ENCODE measurements at regions of chr7 and their contacts with region 1.

Region 1: DNA sequence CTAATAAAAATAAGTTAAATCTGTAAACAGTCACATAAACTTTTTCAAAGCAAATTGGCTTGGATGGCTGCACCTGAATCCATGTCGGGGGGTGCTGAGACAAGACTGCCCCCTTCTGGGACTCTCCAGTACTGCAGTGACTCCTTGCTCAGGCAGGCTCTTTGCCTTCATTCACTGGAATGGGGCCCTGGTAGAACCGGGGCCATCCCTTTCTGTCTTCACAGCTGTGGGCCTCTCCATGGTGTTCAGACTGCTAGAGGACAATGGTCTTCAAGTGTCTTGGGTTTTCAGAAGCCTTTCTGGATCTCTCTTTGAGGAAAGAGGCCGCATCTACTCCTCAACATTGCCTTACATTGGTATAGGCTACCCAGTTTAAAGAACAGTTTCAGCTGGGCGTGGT is 16.1 kb upstream of the IMPDH1 start:
- DNase-seq: peak; percentile 69 to 84
- H3K4me3 ChIP-seq: no peak overlapping the region
- H3K4me3 Mint-ChIP-seq: no peak overlapping the region
- H3K27ac Mint-ChIP-seq: no peak overlapping the region
- H3K4me1 ChIP-seq: no peaks in the 10 kb centered on the region
- H3K4me1 Mint-ChIP-seq: no peaks in the 10 kb centered on the region
- H3K27me3 ChIP-seq: no peaks in the 10 kb centered on the region
- H3K27me3 Mint-ChIP-seq: no peaks in the 10 kb centered on the region
- CTCF ChIP-seq: peak; percentile 89 to 91

Region 2: GRCh38 chr7:128104035-128104742 is 321.7 kb before region 1 on chr7:
- CTCF ChIA-PET with region 1: no interaction called
- POLR2A ChIA-PET with region 1: no interaction called
- intact Hi-C with region 1: no loop called
- DNase-seq: peak in 1 of 2 experiments; percentile 34
- H3K4me3 ChIP-seq: peak overlapping the region; percentile 26
- H3K4me3 Mint-ChIP-seq: peak overlapping the region; percentile 44
- H3K27ac Mint-ChIP-seq: peak overlapping the region; percentile 36
- H3K4me1 ChIP-seq: no peaks in the 10 kb centered on the region; the same call in 1 of the 2 replicates
- H3K4me1 Mint-ChIP-seq: peaks cover 6% of the 10 kb centered on the region
- H3K27me3 ChIP-seq: no peaks in the 10 kb centered on the region
- H3K27me3 Mint-ChIP-seq: peaks cover 4% of the 10 kb centered on the region
- CTCF ChIP-seq: no peak

Region 3: GRCh38 chr7:128197589-128197988 is 228.3 kb before region 1 on chr7:
- CTCF ChIA-PET with region 1: no interaction called
- POLR2A ChIA-PET with region 1: no interaction called
- intact Hi-C with region 1: no loop called
- DNase-seq: no peak
- H3K4me3 ChIP-seq: no peak overlapping the region
- H3K4me3 Mint-ChIP-seq: no peak overlapping the region
- H3K27ac Mint-ChIP-seq: no peak overlapping the region
- H3K4me1 ChIP-seq: no peaks in the 10 kb centered on the region
- H3K4me1 Mint-ChIP-seq: no peaks in the 10 kb centered on the region
- H3K27me3 ChIP-seq: peaks cover 2% of the 10 kb centered on the region
- H3K27me3 Mint-ChIP-seq: peaks cover 16% of the 10 kb centered on the region
- CTCF ChIP-seq: no peak

Region 4: DNA sequence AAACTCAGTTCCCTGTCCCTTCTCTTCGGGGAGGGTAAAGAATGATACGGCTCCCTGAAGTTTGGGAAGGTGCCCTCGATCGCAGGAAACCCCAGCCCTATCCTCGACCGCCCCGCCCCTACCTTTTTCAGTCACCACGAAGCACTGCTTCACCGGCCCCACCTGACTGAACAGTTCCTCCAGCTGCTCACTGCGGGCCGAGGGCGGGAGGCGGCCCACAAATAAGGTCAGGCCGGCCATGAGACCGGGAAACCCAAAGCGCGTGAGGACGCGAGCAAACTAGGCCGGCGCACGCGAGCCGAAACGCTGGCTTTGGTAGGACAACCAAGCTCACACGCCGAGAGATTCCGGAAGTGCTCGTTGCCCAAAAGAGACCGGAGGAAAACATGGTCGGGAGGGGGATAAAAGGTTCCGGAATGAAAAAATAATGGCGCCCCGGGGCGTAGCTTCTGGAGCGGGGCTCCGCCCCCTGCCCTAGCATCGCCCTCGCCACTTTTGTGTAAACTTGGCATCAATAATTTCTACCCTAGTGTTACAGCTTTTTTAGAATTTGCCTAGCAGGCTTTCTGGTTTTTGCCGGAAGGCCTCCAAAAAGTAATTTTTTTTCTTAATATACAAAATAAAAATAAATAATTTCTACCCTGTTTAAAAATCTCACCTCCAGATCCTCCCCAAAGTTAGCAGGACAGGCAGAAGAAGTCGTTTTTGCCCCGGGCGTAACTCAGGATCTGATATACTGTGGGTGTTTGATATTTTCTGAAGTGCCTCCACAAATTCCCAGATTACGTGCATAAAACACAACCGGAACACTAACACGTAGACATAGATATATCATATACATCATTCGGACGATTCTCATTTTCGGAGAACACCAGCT is 82.1 kb before region 1 on chr7 and contains the start of gene RBM28:
- CTCF ChIA-PET with region 1: interaction called, 11 read pairs
- POLR2A ChIA-PET with region 1: no interaction called
- intact Hi-C with region 1: no loop called
- DNase-seq: peak; percentile 92
- H3K4me3 ChIP-seq: peak within 1 kb of the TSS; percentile 86
- H3K4me3 Mint-ChIP-seq: peak within 1 kb of the TSS; percentile 72
- H3K27ac Mint-ChIP-seq: peak within 1 kb of the TSS; percentile 19
- H3K4me1 ChIP-seq: no peaks in the 10 kb centered on the region
- H3K4me1 Mint-ChIP-seq: peaks cover 8% of the 10 kb centered on the region
- H3K27me3 ChIP-seq: no peaks in the 10 kb centered on the region; the same call in 1 of the 2 replicates
- H3K27me3 Mint-ChIP-seq: peaks cover 3% of the 10 kb centered on the region
- CTCF ChIP-seq: no peak
- total RNA-seq, gene RBM28: 68.0 and 71.4 TPM in 2 replicates

Region 5: DNA sequence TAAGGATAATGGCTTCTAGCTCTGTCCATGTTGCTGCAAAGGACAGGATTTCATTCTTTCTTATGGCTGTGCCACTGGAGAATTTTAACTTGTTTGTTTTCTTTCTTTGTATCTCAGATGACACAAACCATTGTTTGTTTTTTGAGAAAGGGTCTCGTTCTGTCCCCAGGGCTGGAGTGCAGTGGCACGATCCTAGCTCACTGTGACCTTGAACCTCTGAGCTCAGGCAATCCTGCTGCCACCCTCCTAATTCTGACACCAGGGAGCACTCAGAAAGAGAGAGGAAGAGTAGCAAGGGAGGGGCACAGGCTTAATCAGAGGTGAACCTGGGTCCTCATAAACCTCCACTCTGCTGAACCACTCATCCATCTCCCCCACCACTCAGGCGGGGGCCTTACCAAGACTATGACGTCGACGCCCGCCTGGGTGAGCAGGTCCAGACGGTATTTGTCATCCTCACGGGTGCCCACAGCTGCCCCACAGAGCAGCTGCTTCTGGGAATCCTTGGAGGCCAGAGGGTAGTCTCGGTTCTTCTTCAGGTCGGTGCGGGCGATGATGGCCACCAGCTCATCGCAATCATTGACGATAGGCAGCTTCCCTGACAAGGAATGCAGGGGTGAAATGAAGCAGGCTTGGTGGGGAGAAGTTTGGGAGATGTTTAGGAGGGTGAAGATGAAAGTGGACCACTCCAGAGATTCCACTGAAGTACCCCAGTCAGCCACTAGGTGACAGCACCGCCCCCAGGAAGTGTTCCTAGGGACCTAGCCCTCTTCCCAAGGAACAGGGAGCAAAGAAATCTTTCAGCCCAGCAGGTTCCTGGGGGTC is 27.6 kb before region 1 on chr7:
- CTCF ChIA-PET with region 1: interaction called, 5 read pairs
- POLR2A ChIA-PET with region 1: no interaction called
- intact Hi-C with region 1: loop called (anchors 1 kb)
- DNase-seq: peak; percentile 66 to 78
- H3K4me3 ChIP-seq: no peak overlapping the region
- H3K4me3 Mint-ChIP-seq: no peak overlapping the region
- H3K27ac Mint-ChIP-seq: no peak overlapping the region
- H3K4me1 ChIP-seq: no peaks in the 10 kb centered on the region
- H3K4me1 Mint-ChIP-seq: no peaks in the 10 kb centered on the region
- H3K27me3 ChIP-seq: no peaks in the 10 kb centered on the region
- H3K27me3 Mint-ChIP-seq: no peaks in the 10 kb centered on the region
- CTCF ChIP-seq: peak; percentile 95 to 98

Region 6: GRCh38 chr7:128443831-128444600 is 18.2 kb after region 1 on chr7:
- CTCF ChIA-PET with region 1: interaction called, 18 read pairs
- POLR2A ChIA-PET with region 1: no interaction called
- intact Hi-C with region 1: no loop called
- DNase-seq: peak; percentile 53 to 62
- H3K4me3 ChIP-seq: no peak overlapping the region
- H3K4me3 Mint-ChIP-seq: no peak overlapping the region
- H3K27ac Mint-ChIP-seq: peak overlapping the region; percentile 69
- H3K4me1 ChIP-seq: peaks cover 26% of the 10 kb centered on the region
- H3K4me1 Mint-ChIP-seq: peaks cover 17% of the 10 kb centered on the region
- H3K27me3 ChIP-seq: no peaks in the 10 kb centered on the region
- H3K27me3 Mint-ChIP-seq: no peaks in the 10 kb centered on the region
- CTCF ChIP-seq: no peak

Region 7: DNA sequence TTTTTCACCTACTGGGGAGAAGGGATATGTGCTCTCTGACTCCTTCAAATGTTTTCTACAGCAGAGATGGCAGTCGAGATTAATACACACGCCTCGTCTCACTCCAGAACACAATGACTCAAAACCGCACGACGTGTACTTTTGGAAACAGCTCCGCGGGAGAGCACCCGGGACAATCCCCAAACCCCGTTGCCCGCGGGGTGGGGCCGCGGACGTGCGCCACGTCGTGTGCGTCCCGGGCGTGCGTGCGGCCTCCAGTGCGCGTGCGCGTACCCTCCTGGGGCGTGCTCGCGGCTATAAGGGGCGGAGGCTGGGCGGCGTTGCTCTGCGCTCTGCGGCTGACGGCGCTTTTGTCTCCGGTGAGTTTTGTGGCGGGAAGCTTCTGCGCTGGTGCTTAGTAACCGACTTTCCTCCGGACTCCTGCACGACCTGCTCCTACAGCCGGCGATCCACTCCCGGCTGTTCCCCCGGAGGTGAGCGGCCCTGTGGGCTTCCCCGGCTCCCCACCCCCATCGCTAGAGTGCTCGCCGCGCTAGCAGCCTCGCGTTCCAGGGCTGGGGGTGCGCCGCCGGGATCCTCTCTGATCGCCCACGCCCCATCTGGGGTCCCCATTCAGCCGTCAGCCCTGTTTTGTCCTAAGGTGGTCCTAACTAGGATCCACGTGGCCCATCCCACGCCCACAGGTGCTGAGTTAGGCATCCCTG is 29.9 kb after region 1 on chr7 and contains the start of gene HILPDA:
- CTCF ChIA-PET with region 1: interaction called, 226 read pairs
- POLR2A ChIA-PET with region 1: interaction called, 3 read pairs
- intact Hi-C with region 1: loop called (anchors 1 kb)
- DNase-seq: peak; percentile 89 to 90
- H3K4me3 ChIP-seq: peak within 1 kb of the TSS; percentile 70
- H3K4me3 Mint-ChIP-seq: peak within 1 kb of the TSS; percentile 99
- H3K27ac Mint-ChIP-seq: peak within 1 kb of the TSS; percentile 92
- H3K4me1 ChIP-seq: peaks cover 33% of the 10 kb centered on the region
- H3K4me1 Mint-ChIP-seq: peaks cover 32% of the 10 kb centered on the region
- H3K27me3 ChIP-seq: no peaks in the 10 kb centered on the region
- H3K27me3 Mint-ChIP-seq: peaks cover 5% of the 10 kb centered on the region
- CTCF ChIP-seq: no peak
- total RNA-seq, gene HILPDA: 17.0 and 17.8 TPM in 2 replicates

Region 8: GRCh38 chr7:128462460-128462859 is 36.6 kb after region 1 on chr7:
- CTCF ChIA-PET with region 1: interaction called, 226 read pairs
- POLR2A ChIA-PET with region 1: interaction called, 3 read pairs
- intact Hi-C with region 1: loop called (anchors 1 kb)
- DNase-seq: no peak
- H3K4me3 ChIP-seq: no peak overlapping the region
- H3K4me3 Mint-ChIP-seq: no peak overlapping the region
- H3K27ac Mint-ChIP-seq: no peak overlapping the region
- H3K4me1 ChIP-seq: no peaks in the 10 kb centered on the region
- H3K4me1 Mint-ChIP-seq: peaks cover 24% of the 10 kb centered on the region
- H3K27me3 ChIP-seq: no peaks in the 10 kb centered on the region
- H3K27me3 Mint-ChIP-seq: no peaks in the 10 kb centered on the region
- CTCF ChIP-seq: no peak

Region 9: GRCh38 chr7:128591705-128592104 is 165.9 kb after region 1 on chr7:
- CTCF ChIA-PET with region 1: no interaction called
- POLR2A ChIA-PET with region 1: no interaction called
- intact Hi-C with region 1: no loop called
- DNase-seq: no peak
- H3K4me3 ChIP-seq: no peak overlapping the region
- H3K4me3 Mint-ChIP-seq: no peak overlapping the region
- H3K27ac Mint-ChIP-seq: no peak overlapping the region
- H3K4me1 ChIP-seq: no peaks in the 10 kb centered on the region
- H3K4me1 Mint-ChIP-seq: peaks cover 13% of the 10 kb centered on the region
- H3K27me3 ChIP-seq: no peaks in the 10 kb centered on the region
- H3K27me3 Mint-ChIP-seq: no peaks in the 10 kb centered on the region
- CTCF ChIP-seq: no peak